ENCODE measurements at regions of chr1 and their contacts with region 1.

Region 1: DNA sequence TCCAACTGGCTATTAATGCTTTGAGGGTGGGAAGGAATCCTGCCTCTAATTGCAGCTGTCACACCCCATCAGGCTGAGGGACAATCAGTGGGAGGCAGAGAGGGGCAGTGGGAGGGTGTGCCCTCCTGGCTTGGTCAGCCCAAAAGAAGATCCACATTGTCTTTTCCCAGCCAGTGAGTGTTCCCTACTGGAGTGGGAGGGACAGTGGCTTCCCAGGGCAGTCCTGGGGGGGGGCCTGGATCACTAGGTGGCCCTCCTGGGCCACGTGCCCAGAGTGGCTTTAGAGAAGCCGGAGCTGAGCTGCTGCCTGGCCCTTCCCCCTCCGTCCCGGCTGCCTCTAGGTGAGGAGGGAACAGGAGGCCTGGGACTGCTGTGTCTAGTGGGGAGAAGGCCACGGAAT is 14.0 kb downstream of the INKA2 start:
- DNase-seq: no peak
- ATAC-seq: peak; percentile 46

Region 2: DNA sequence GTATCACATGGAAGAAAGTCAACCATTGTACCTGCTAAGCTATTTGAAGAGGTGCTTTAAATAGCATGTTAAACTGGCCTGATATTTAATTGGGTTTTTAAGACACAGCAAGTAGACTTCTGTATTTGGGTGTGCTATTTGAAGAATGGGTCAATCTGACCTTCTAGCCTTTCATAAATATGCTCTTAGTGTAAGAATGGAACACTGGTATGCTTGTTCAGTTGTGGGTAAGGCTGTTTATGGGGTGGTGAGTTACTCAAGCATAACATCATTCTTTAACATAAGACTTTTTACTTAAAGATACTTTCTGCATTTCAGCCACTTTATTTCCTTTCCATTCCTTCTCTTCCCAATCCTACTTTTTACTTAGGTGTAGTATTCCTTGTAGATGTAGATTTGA is 1719.2 kb before region 1 on chr1:
- intact Hi-C with region 1: loop called (anchors 5 kb)
- DNase-seq: no peak
- ATAC-seq: no peak

Measured in sciatic nerve (tissue), 2 donors.